ENCODE measurements at regions of chr13 and their contacts with region 1.

Region 1: GRCh38 chr13:75704579-75705320 is 68.6 kb downstream of the LMO7 start:
- DNase-seq: peak; percentile 63
- H3K4me3 Mint-ChIP-seq: peak overlapping the region; percentile 45
- H3K27ac Mint-ChIP-seq: peak overlapping the region; percentile 93
- H3K4me1 Mint-ChIP-seq: no peaks in the 10 kb centered on the region
- H3K27me3 Mint-ChIP-seq: no peaks in the 10 kb centered on the region
- CTCF ChIP-seq: no peak

Region 2: DNA sequence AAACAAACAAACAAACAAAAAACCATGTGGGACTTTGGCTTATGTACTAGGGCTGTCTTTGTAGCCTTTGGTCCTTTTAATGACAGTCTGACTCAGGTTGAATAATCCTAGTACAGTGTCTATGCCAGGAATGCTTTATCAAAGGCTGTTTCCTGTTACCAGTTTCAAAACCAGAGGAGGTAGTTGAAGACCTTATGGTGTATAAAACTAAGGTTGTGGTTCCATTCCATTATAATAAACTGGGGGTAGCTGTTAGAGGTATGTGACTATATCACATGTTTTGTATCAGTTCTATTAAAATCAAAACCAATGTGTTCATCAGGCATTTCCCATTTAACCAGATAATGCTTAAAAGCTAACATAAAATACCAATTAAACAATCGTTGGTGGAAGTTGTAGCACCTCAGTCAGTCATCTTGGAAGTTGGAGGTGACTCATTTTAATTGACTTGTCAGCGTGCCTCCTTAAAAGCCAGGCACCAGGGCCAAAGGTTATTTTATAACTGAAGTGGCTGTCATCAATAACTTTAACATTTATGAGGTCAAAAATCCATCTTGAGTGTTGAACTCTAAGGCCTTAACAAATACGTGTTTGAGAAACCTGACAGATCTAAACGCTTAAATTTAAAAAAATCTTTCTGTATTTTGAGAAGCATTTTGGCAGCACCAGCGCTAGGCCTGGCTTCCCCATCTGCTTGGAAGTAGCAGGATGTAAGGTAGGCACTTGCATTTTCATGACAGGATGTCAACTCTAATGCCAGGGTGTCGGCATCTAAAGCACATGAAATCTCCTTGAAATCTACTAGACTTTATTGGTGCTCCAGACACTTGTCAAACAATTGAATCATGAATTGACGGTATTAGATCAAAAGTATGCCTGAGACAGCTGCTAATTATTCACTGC is 93.9 kb after region 1 on chr13:
- CTCF ChIA-PET with region 1: no interaction called
- intact Hi-C with region 1: loop called (anchors 10 kb)
- DNase-seq: no peak
- H3K4me3 Mint-ChIP-seq: no peak overlapping the region
- H3K27ac Mint-ChIP-seq: peak overlapping the region; percentile 39
- H3K4me1 Mint-ChIP-seq: no peaks in the 10 kb centered on the region
- H3K27me3 Mint-ChIP-seq: no peaks in the 10 kb centered on the region
- CTCF ChIP-seq: no peak

Measured in Calu3 (cell line).